A673 (cell line): ENCODE measurements at regions of chr12 and their contacts with region 1.

Region 1: DNA sequence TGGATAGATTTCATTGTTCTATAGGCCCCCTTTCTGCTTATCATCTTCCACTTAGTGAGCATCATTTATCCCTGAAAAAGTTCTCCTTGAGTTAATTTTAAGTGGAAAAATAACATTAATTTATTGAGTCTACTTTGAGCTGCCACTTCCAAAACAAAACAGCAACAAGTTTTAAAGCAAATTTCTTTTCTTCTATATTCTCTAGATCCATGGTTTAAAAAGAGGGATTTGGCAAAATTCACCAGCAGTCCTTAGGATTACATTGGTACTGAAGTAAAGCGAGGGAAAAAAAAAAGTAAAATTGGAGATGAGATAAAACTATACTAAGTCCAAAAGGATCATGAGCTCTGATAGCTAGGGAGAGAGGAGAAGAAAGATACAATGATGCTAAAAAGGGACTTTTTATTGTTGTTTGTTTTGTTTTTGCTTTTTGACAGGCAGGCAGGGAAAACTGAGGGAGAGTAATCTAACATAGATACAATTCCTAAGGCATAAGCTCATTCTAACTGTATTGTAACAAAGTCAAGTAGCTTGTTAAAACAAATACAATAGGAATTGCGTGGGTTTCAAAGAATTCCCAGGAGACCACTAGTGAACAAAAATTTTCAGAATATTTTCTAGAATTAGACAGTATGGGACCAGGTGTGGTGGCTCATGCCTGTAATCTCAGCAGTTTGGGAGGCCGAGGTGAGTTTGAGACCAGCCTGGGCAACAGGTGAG is 19.2 kb upstream of the PLEKHA5 start:
- DNase-seq: no peak
- H3K4me3 ChIP-seq: no peak overlapping the region
- H3K27ac ChIP-seq: no peak overlapping the region
- H3K4me1 ChIP-seq: no peaks in the 10 kb centered on the region
- H3K27me3 ChIP-seq: no peaks in the 10 kb centered on the region
- CTCF ChIP-seq: no peak

Region 2: GRCh38 chr12:19066475-19067001 is 43.8 kb before region 1 on chr12:
- CTCF ChIA-PET with region 1: no interaction called
- POLR2A ChIA-PET with region 1: interaction called, 10 read pairs
- intact Hi-C with region 1: no loop called
- DNase-seq: no peak
- H3K4me3 ChIP-seq: no peak overlapping the region
- H3K27ac ChIP-seq: no peak overlapping the region
- H3K4me1 ChIP-seq: no peaks in the 10 kb centered on the region
- H3K27me3 ChIP-seq: no peaks in the 10 kb centered on the region
- CTCF ChIP-seq: no peak